ENCODE measurements at regions of chr5 and their contacts with region 1.

Region 1: DNA sequence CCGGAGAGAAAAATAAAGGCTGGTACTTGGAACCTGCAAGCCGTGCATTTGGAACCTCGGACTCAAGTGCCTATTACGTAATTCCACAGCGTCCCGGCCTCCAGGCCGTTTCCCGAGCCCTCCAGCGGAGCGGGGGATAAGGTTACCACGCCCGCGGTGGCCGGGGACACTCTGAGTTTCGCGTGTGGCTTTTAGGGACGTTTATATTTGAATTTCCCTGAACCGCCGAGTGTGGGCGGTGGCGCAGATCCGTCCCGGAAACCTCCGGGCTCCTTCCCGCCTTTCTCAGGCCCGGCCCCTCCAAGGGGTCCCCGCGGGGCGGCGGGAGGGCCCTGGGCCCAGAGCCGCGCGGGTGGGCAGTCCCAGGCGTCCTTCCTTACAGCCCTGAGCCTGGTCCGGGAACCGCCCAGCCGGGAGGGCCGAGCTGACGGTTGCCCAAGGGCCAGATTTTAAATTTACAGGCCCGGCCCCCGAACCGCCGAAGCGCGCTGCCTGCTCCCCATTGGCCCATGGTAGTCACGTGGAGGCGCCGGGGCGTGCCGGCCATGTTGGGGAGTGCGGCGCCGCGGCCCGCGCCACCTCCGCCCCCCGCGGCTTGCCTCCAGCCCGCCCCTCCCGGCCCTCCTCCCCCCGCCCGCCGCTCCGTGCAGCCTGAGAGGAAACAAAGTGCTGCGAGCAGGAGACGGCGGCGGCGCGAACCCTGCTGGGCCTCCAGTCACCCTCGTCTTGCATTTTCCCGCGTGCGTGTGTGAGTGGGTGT is at the start of gene LMNB1:
- DNase-seq: peak; percentile 97
- ATAC-seq: peak; percentile 70
- H3K4me3 Mint-ChIP-seq: peak within 1 kb of the TSS; percentile 91
- H3K27ac Mint-ChIP-seq: peak within 1 kb of the TSS; percentile 98
- H3K4me1 Mint-ChIP-seq: peaks cover 23% of the 10 kb centered on the region
- H3K27me3 Mint-ChIP-seq: no peaks in the 10 kb centered on the region
- total RNA-seq, gene LMNB1: 323 to 364 TPM

Region 2: DNA sequence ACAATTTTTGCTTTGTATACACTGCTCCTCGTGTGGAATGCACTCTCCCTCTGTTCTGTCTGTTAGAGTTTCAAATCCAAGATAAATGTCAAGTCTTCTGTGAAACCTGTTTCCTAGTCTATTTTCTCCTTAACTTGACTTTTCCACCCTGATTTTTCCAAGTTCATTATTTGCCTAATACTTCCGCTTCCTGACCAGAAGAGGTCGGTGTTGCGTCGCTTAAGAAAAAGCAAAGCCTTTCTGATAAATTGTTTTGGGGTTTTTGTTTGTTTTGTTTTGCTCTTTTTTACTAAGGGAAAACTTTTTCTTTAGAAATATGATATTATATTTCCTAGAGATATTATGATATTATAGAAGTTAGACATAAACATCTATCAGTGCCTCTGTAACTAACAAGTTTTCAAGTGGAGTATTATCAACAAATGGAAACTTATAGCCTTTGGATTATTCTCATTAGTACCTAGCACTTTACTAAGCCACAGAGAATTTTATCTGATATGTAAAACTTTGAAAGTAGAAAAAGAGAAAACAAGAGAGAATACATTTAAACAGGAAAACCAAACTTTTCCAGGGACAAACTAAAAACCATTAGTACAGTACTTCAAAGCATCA is 120.2 kb before region 1 on chr5:
- CTCF ChIA-PET with region 1: interaction called, 11 read pairs
- DNase-seq: no peak
- ATAC-seq: no peak
- H3K4me3 Mint-ChIP-seq: no peak overlapping the region
- H3K27ac Mint-ChIP-seq: no peak overlapping the region
- H3K4me1 Mint-ChIP-seq: peaks cover 6% of the 10 kb centered on the region
- H3K27me3 Mint-ChIP-seq: peaks cover 6% of the 10 kb centered on the region

Region 3: DNA sequence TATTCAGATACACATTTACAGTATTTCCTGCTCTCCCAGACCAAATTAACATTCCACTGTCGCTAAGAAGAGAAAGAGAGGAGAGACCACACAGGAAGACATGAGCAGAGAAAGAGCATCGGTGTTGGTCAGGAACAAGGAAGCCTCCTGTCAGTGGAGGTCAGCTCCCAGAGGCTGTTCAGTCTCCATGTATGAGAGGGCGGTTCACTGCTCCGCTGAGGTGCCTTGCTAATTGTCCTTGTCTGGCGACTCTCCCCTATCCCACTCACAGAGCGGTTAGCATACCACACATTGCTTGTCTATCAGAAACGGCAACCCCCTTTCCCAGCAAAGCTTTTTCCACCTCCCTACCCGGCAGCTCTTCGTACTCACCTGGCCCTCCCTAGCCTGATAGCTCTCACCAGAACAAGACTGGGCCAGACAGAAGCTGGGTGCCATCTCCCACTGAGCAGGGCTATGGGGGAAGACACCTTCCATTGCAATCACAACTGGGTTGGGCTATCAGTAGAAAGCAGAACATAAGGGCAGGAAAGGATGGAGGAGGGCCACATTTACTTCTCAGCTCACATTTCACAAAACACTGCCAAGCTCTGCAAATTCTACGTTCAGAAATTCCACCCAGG is 58.3 kb before region 1 on chr5:
- CTCF ChIA-PET with region 1: interaction called, 10 read pairs
- DNase-seq: no peak
- ATAC-seq: no peak
- H3K4me3 Mint-ChIP-seq: no peak overlapping the region
- H3K27ac Mint-ChIP-seq: no peak overlapping the region
- H3K4me1 Mint-ChIP-seq: peaks cover 9% of the 10 kb centered on the region
- H3K27me3 Mint-ChIP-seq: no peaks in the 10 kb centered on the region

Region 4: DNA sequence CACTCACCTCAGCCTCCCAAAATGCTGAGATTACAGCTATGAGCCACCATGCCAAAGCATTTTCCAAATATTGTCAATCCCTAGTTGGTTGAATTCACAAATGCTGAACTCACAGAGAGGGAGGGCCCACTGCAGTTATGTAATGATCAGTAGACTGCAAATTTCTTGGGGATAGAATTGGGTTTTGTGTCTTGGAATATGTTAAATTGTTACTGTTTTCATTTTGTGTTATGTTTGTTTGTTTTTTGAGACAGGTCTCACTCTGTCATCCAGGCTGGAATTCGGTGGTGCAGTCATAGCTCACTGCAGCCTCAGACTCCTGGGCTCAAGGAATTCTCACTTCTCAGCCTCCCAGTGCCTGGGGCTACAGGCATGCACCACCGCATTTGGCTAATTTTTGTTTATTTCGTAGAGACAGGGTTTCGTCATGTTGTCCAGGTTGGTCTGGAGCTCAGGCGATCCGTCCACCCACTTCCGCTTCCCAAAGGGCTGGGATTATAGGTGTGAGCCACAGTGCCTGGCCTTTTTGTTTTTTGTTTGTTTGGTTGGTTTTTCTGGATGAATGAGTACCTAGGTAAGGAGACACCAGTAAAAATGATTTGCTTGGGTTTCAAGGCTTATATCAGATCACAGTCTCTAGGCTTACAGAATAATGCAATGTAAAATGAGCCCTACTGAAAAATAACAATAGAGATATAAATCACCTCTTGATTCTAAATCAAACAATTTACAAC is 31.3 kb before region 1 on chr5:
- CTCF ChIA-PET with region 1: interaction called, 15 read pairs
- DNase-seq: no peak
- ATAC-seq: no peak
- H3K4me3 Mint-ChIP-seq: no peak overlapping the region
- H3K27ac Mint-ChIP-seq: no peak overlapping the region
- H3K4me1 Mint-ChIP-seq: peaks cover 29% of the 10 kb centered on the region
- H3K27me3 Mint-ChIP-seq: peaks cover 4% of the 10 kb centered on the region

Region 5: GRCh38 chr5:126763371-126763770 is 13.3 kb before region 1 on chr5:
- CTCF ChIA-PET with region 1: interaction called, 33 read pairs
- DNase-seq: no peak
- ATAC-seq: no peak
- H3K4me3 Mint-ChIP-seq: no peak overlapping the region
- H3K27ac Mint-ChIP-seq: peak overlapping the region; percentile 46
- H3K4me1 Mint-ChIP-seq: peaks cover 48% of the 10 kb centered on the region
- H3K27me3 Mint-ChIP-seq: no peaks in the 10 kb centered on the region

Region 6: GRCh38 chr5:126801992-126802294 is 25.3 kb after region 1 on chr5:
- CTCF ChIA-PET with region 1: interaction called, 14 read pairs
- DNase-seq: no peak
- ATAC-seq: no peak
- H3K4me3 Mint-ChIP-seq: no peak overlapping the region
- H3K27ac Mint-ChIP-seq: no peak overlapping the region
- H3K4me1 Mint-ChIP-seq: peaks cover 55% of the 10 kb centered on the region
- H3K27me3 Mint-ChIP-seq: no peaks in the 10 kb centered on the region